Activated CD4-positive, alpha-beta memory T cell treated with anti-CD3 and anti-CD28 coated beads for 36 hours (primary cell): ENCODE measurements at regions of chr7 and their contacts with region 1.

Region 1: DNA sequence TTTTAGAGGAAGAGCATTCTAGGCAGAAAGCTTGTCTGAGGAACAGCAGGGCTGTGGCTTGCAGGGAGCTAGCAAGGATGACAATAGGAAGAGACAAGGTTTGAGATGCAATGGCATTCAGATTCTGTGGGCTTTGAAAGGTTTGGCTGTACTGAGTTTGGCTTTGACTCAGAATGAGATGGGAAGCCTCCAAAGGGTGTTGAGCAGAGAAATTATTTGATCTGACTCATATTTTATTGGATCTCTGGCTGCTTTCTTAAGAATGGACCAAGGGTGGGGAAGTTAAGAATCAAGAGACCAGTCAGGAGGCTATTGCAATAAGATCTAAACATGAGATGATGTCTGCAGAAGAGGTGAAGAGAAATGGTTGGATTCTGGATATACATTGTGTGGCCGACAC is 273.2 kb downstream of the CDK14 start:
- DNase-seq: no peak
- H3K4me3 Mint-ChIP-seq: no peak overlapping the region
- H3K27ac Mint-ChIP-seq: no peak overlapping the region
- H3K4me1 Mint-ChIP-seq: no peaks in the 10 kb centered on the region
- H3K27me3 Mint-ChIP-seq: no peaks in the 10 kb centered on the region

Region 2: DNA sequence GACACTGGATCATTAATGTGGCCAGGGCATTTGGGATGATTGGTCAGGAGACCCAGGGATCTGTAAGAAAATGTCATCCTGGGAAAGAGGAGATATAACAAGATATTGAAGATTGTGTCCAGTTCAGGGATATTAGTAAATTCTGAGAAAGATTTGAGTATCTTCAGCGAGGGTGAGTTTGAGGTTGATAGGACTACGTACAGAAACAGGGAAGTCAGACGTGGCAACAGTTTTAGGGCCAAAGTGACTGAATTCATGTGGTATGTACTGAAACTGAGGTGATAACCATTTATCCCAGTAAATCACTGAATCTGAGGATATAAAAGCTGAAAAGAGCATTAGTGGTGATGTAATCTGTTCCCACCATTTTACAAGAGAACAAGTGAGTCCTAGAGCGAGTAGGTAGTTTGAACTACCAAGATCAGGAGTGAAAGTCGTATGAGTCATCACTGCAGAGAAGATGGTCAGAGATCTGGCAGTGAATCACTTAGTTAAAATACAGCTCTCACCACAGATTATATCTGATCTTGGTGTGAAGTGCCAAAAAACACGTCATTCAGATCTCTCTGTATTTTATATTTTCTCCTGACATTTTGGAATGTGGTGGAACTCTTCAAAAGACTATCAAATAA is 52.7 kb before region 1 on chr7:
- CTCF ChIA-PET with region 1: no interaction called
- POLR2A ChIA-PET with region 1: no interaction called
- intact Hi-C with region 1: loop called (anchors 5 kb)
- DNase-seq: no peak
- H3K4me3 Mint-ChIP-seq: no peak overlapping the region
- H3K27ac Mint-ChIP-seq: no peak overlapping the region
- H3K4me1 Mint-ChIP-seq: no peaks in the 10 kb centered on the region
- H3K27me3 Mint-ChIP-seq: no peaks in the 10 kb centered on the region

Region 3: GRCh38 chr7:90843472-90843871 is 25.9 kb before region 1 on chr7:
- CTCF ChIA-PET with region 1: no interaction called
- POLR2A ChIA-PET with region 1: no interaction called
- intact Hi-C with region 1: no loop called
- DNase-seq: no peak
- H3K4me3 Mint-ChIP-seq: no peak overlapping the region
- H3K27ac Mint-ChIP-seq: no peak overlapping the region
- H3K4me1 Mint-ChIP-seq: no peaks in the 10 kb centered on the region
- H3K27me3 Mint-ChIP-seq: no peaks in the 10 kb centered on the region